ENCODE measurements at regions of chr3 and their contacts with region 1.

Region 1: DNA sequence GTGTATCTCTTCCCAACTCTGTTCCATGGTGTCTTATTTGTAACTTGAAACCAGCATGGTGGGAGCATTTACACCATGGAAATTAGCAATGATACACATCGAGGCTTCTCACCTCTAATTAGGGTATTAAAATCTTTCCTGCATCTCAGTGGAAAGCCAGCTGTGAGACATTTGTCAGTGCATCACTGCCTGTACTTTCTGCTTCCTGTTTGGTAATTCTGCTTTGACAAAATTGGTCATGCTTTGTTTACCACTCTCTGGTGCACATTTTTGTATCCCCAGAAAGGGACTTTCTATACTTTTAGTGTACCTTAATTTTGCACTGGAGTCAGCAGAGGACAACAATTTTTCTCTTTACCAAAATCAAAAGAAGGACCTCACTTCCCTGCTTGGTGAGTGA is 402.1 kb downstream of the PDCD6IP start:
- DNase-seq: no peak
- H3K4me3 ChIP-seq: no peak overlapping the region
- H3K27ac ChIP-seq: no peak overlapping the region
- H3K4me1 ChIP-seq: no peaks in the 10 kb centered on the region
- H3K27me3 ChIP-seq: no peaks in the 10 kb centered on the region
- CTCF ChIP-seq: no peak

Region 2: DNA sequence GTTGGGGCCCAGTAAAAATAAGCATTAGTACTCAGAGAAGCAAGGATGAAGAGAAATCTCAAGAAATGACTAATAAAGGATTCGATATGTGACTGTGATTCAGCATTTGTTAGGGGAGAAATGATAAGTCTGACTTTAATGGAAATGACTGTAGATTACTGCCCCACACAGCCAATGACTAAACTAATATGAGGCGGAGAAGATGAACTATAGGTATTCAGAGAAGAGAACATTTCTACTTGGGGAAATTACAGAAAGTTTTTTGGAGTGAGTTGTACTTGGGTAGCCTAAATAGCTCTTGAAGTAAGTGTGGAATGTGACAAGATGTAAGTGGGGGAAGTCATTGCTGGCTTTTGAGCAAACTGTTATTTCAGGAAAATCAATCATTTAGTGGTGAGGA is 22.2 kb before region 1 on chr3:
- CTCF ChIA-PET with region 1: no interaction called
- dilution Hi-C with region 1: no loop called
- in situ Hi-C with region 1: no loop called
- intact Hi-C with region 1: no loop called
- DNase-seq: no peak
- H3K4me3 ChIP-seq: no peak overlapping the region
- H3K27ac ChIP-seq: no peak overlapping the region
- H3K4me1 ChIP-seq: no peaks in the 10 kb centered on the region
- H3K27me3 ChIP-seq: no peaks in the 10 kb centered on the region
- CTCF ChIP-seq: no peak

Region 3: GRCh38 chr3:35894735-35895134 is 1694.2 kb after region 1 on chr3:
- CTCF ChIA-PET with region 1: no interaction called
- dilution Hi-C with region 1: no loop called
- in situ Hi-C with region 1: no loop called
- intact Hi-C with region 1: loop called (anchors 5 kb)
- DNase-seq: no peak
- H3K4me3 ChIP-seq: no peak overlapping the region
- H3K27ac ChIP-seq: no peak overlapping the region
- H3K4me1 ChIP-seq: no peaks in the 10 kb centered on the region
- H3K27me3 ChIP-seq: no peaks in the 10 kb centered on the region
- CTCF ChIP-seq: no peak